Testis (tissue), 5 donors: ENCODE measurements at regions of chr2 and their contacts with region 1.

Region 1: DNA sequence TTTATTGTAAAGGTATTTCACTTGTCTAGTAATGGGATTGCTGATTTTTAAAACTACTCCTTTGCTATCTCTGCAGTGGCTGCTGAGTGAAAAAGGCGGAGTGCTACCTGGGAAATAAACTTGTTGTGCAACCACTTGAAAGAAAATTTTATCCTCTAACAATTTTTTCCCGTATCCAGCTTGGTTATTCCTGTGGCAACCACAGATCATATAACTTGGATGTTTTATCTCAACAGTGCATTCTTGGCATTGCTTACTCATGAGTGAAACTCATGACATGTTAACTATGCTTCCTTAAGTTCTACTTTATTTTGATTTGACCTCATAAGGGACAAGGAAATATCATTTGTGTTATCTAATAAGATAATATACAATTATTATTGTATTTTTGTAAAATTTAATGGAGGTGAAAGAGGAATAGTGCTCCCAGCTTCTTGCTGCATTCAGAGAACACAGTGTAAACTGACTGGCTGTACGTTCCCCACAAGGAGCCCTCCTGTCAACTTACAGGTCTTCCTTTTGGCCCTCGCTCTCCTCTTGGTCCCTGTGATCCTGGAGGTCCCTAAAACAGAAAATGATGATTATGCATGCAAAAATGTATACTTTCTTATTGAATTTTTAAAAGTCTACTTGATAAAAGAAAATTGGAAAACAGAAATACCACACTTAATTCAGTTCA is 82.7 kb downstream of the COL5A2 start:
- DNase-seq: no peak
- H3K4me3 ChIP-seq: no peak overlapping the region
- H3K27ac ChIP-seq: no peak overlapping the region
- H3K4me1 ChIP-seq: peaks cover 5% of the 10 kb centered on the region
- H3K27me3 ChIP-seq: no peaks in the 10 kb centered on the region
- CTCF ChIP-seq: no peak
- POLR2A ChIP-seq: no peak

Region 2: GRCh38 chr2:189204322-189204941 is 107.5 kb after region 1 on chr2:
- intact Hi-C with region 1: no loop called
- DNase-seq: no peak
- H3K4me3 ChIP-seq: no peak overlapping the region
- H3K27ac ChIP-seq: no peak overlapping the region
- H3K4me1 ChIP-seq: no peaks in the 10 kb centered on the region
- H3K27me3 ChIP-seq: no peaks in the 10 kb centered on the region
- CTCF ChIP-seq: no peak
- POLR2A ChIP-seq: no peak

Region 3: GRCh38 chr2:189412330-189412953 is 315.5 kb after region 1 on chr2:
- intact Hi-C with region 1: loop called (anchors 10 kb)
- DNase-seq: peak; percentile 22
- H3K4me3 ChIP-seq: no peak overlapping the region
- H3K27ac ChIP-seq: peak overlapping the region in 1 of 2 donors; percentile 33
- H3K4me1 ChIP-seq: no peaks in the 10 kb centered on the region
- H3K27me3 ChIP-seq: no peaks in the 10 kb centered on the region
- CTCF ChIP-seq: peak; percentile 65 to 81 (median 78)
- POLR2A ChIP-seq: no peak